Caco-2 (cell line): ENCODE measurements at regions of chr12 and their contacts with region 1.

Region 1: DNA sequence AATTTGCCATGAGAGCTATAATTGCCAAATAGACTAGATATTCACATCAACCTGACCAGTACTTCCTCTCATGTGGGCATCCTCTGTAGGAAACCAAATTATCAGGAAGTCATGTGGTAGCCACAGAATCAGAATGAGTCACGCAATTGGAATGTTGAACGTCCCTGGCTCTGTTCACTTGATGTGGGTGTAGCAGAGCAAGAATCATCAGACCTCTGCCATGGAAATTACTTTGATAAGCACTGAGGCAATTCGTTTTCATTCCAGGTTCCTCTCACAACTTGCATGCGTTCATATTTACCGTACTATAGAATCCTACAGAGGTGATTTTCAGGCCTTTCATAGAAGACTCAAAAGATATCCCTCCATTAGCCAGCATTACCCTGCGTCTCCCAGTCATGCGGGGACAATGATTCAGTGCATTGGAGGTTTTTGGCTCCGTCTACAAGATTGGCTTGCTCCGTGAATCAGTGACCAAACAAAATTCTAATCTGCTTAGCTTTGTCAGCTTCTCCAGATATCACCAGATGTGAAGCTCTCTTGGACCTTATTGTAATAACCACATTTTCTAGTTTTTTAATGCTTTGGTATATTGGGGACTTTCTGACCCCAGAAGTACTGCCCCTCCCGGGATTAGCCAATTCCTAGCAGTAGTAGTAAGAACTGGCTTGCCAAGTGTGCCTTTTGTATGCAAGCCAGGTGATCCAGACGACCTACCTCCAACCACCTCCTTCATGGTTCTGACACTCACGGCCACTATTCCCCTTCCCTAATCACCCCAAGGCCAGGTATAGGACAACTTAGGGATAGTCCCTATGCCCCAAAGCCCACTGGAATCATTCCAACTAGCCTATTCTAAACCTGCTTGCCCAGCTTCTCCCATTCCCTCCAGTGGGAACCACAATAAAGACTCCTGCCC is 133.4 kb downstream of the KICS2 start:
- DNase-seq: peak; percentile 29 to 54
- H3K4me3 ChIP-seq: no peak overlapping the region
- H3K4me3 Mint-ChIP-seq: no peak overlapping the region
- H3K27ac Mint-ChIP-seq: peak overlapping the region; percentile 52
- H3K4me1 ChIP-seq: peaks cover 11% of the 10 kb centered on the region; the same call in 1 of the 2 replicates
- H3K4me1 Mint-ChIP-seq: no peaks in the 10 kb centered on the region
- H3K27me3 ChIP-seq: no peaks in the 10 kb centered on the region
- H3K27me3 Mint-ChIP-seq: no peaks in the 10 kb centered on the region
- CTCF ChIP-seq: no peak

Region 2: GRCh38 chr12:64147011-64147631 is 58.4 kb after region 1 on chr12:
- CTCF ChIA-PET with region 1: no interaction called
- POLR2A ChIA-PET with region 1: no interaction called
- intact Hi-C with region 1: no loop called
- DNase-seq: no peak
- H3K4me3 ChIP-seq: no peak overlapping the region
- H3K4me3 Mint-ChIP-seq: no peak overlapping the region
- H3K27ac Mint-ChIP-seq: no peak overlapping the region
- H3K4me1 ChIP-seq: no peaks in the 10 kb centered on the region
- H3K4me1 Mint-ChIP-seq: peaks cover 7% of the 10 kb centered on the region
- H3K27me3 ChIP-seq: no peaks in the 10 kb centered on the region
- H3K27me3 Mint-ChIP-seq: no peaks in the 10 kb centered on the region
- CTCF ChIP-seq: no peak

Region 3: GRCh38 chr12:64181504-64182291 is 93.0 kb after region 1 on chr12:
- CTCF ChIA-PET with region 1: no interaction called
- POLR2A ChIA-PET with region 1: no interaction called
- intact Hi-C with region 1: loop called (anchors 10 kb)
- DNase-seq: peak; percentile 53 to 58
- H3K4me3 ChIP-seq: no peak overlapping the region
- H3K4me3 Mint-ChIP-seq: no peak overlapping the region
- H3K27ac Mint-ChIP-seq: peak overlapping the region; percentile 55
- H3K4me1 ChIP-seq: peaks cover 35% of the 10 kb centered on the region
- H3K4me1 Mint-ChIP-seq: peaks cover 34% of the 10 kb centered on the region
- H3K27me3 ChIP-seq: no peaks in the 10 kb centered on the region
- H3K27me3 Mint-ChIP-seq: no peaks in the 10 kb centered on the region
- CTCF ChIP-seq: peak; percentile 59 to 67